Calu3 (cell line): ENCODE measurements at regions of chr19 and their contacts with region 1.

Region 1: DNA sequence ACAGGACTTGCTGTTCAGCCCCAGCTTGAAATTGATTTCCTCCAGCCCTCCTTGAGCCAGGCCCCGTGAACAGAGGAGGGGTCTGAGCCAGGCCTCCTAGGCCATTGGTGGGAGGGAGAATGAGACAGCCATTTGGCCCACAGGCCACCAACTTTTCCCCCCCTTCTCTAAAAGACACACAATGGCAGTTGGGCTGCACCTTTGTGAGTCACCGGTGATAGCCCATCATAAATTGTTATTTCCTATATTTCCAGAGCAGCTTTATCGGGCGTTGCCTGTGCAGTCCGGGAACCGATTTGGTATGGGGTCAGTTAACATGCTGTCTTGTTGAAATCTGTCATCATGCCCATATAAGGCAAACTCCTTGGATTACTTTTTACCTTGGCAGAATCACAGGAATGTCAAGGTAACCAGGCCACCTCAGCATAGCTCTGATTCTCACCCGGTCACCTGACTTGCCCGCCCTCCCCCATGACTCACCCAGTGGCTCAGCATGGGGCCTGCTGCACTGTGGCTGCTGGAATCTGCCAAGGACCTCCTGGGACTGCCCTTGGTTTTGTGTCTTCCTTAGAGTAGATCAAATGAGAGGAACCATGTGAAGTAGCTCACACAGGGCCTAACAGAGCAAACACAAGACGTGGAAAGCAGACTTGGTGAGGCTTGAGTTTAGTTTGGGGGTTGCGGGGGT is 36.1 kb downstream of the ACTN4 start:
- DNase-seq: peak; percentile 99
- H3K4me3 Mint-ChIP-seq: peak overlapping the region; percentile 61
- H3K27ac Mint-ChIP-seq: peak overlapping the region; percentile 100
- H3K4me1 Mint-ChIP-seq: peaks cover 93% of the 10 kb centered on the region
- H3K27me3 Mint-ChIP-seq: no peaks in the 10 kb centered on the region
- CTCF ChIP-seq: no peak

Region 2: DNA sequence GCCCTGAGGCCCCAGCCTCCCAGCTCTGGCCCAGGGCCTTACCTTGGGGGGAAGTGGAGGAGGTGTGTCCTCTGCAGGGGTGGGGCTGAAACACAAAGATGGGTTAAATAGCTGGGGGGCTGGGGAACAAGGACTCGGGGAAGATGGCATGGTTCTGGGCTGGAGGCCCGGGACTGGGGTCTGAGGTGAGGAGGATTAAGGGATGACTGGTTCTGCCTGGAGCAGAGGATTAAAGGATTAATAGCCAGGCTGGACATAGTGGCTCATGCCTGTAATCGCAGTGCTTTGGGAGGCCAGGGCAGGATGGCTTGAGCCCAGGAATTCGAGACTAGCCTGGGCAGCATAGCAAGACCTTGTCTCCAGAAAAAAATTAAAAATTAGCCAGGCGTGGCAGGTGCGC is 77.4 kb before region 1 on chr19:
- CTCF ChIA-PET with region 1: no interaction called
- intact Hi-C with region 1: no loop called
- DNase-seq: no peak
- H3K4me3 Mint-ChIP-seq: no peak overlapping the region
- H3K27ac Mint-ChIP-seq: no peak overlapping the region
- H3K4me1 Mint-ChIP-seq: no peaks in the 10 kb centered on the region
- H3K27me3 Mint-ChIP-seq: peaks cover 31% of the 10 kb centered on the region
- CTCF ChIP-seq: no peak

Region 3: DNA sequence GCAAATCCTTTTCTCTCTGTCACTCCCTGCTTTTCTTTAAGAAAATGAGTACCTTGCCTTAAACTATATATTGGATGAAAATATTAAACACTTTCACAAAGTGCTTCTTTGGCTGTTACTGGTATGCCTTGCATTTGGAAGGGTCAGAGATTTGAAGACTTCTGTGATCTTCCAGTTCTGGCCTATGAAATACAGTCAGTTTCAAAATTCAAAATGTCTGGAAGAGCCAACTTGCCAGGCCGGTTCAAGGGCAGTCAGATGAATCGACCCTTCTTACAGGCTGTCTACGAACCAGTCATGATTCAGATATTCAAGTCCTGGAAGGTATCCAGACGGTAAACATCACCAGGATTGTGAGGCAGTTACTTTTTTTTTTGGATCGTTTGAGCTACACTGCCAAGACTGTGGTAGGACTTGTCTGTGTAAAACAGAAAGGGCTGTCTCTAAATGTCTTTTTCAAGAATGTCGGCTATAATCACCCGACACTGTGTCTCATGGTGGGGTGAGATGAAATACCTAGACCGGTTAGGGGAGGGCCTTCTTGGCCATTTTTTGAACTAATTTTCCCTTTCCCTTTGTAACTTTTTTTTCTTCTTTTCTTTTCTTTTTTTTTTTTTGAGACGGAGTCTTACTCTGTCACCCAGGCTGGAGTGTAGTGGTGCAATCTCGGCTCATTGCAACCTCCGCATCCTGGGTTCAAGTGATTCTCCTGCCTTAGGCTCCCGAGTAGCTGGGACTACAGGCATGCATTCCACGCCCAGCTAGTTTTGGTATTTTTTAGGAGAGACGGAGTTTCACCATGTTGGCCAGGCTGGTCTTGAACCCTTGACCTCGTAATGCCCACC is 24.9 kb before region 1 on chr19:
- CTCF ChIA-PET with region 1: interaction called, 22 read pairs
- intact Hi-C with region 1: no loop called
- DNase-seq: peak; percentile 84
- H3K4me3 Mint-ChIP-seq: peak overlapping the region; percentile 99
- H3K27ac Mint-ChIP-seq: peak overlapping the region; percentile 100
- H3K4me1 Mint-ChIP-seq: peaks cover 91% of the 10 kb centered on the region
- H3K27me3 Mint-ChIP-seq: no peaks in the 10 kb centered on the region
- CTCF ChIP-seq: no peak

Region 4: GRCh38 chr19:38666663-38667511 is 16.6 kb before region 1 on chr19:
- CTCF ChIA-PET with region 1: interaction called, 10 read pairs
- intact Hi-C with region 1: loop called (anchors 2 kb)
- DNase-seq: peak; percentile 74
- H3K4me3 Mint-ChIP-seq: peak overlapping the region; percentile 29
- H3K27ac Mint-ChIP-seq: peak overlapping the region; percentile 100
- H3K4me1 Mint-ChIP-seq: peaks cover 100% of the 10 kb centered on the region
- H3K27me3 Mint-ChIP-seq: no peaks in the 10 kb centered on the region
- CTCF ChIP-seq: no peak

Region 5: GRCh38 chr19:38729653-38730469 is 46.3 kb after region 1 on chr19:
- CTCF ChIA-PET with region 1: no interaction called
- intact Hi-C with region 1: no loop called
- DNase-seq: peak; percentile 92
- H3K4me3 Mint-ChIP-seq: no peak overlapping the region
- H3K27ac Mint-ChIP-seq: peak overlapping the region; percentile 64
- H3K4me1 Mint-ChIP-seq: peaks cover 44% of the 10 kb centered on the region
- H3K27me3 Mint-ChIP-seq: no peaks in the 10 kb centered on the region
- CTCF ChIP-seq: peak; percentile 88